Common myeloid progenitor, CD34-positive (primary cell): ENCODE measurements at regions of chr11 and their contacts with region 1.

Region 1: DNA sequence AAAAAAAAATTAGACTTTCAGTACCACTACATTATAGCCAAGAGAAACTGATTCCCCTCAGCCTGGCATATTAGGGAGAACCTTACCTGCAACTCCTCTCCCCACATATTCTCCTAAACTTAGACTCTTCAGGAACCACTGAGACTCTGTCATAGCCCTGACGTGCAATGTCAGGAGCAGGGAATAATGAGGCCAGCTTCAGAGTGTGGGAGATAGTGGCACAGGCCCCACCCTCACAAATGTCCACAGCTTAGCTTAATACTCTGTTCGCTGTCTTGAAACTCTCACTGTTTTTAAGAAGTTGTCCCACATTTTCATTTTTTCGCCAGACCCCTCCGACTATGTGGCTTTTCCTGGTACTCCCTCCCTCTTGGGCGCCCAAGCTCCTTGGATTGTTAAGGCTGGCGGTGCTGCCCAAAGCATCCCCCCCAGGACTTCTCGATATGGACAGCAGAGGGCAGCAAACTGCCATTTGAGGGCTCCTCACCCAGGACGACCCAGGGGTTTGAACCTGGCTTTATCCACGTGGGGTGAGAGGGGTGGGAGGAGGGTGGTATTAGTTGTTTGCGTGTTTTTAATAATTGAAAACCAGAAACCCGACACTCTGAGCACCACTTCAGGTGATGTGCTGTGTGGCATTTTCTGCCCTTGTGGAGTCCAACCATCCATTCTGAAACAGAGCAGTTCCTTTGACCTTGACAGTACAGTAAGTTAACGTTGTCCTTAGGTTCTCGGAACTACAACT is 45.2 kb upstream of the RASSF10 start:
- DNase-seq: peak; percentile 50 to 74 (median 62)
- H3K4me3 ChIP-seq: no peak overlapping the region
- H3K27ac ChIP-seq: no peak overlapping the region
- H3K4me1 ChIP-seq: no peaks in the 10 kb centered on the region
- H3K27me3 ChIP-seq: peaks cover 0 to 3% (median 0%) of the 10 kb centered on the region in 5 experiments

Region 2: GRCh38 chr11:12922980-12923507 is 40.9 kb before region 1 on chr11:
- CTCF ChIA-PET with region 1: no interaction called
- POLR2A ChIA-PET with region 1: no interaction called
- DNase-seq: no peak
- H3K4me3 ChIP-seq: no peak overlapping the region
- H3K27ac ChIP-seq: no peak overlapping the region
- H3K4me1 ChIP-seq: no peaks in the 10 kb centered on the region
- H3K27me3 ChIP-seq: peaks cover 0 to 4% (median 0%) of the 10 kb centered on the region in 5 experiments

Region 3: DNA sequence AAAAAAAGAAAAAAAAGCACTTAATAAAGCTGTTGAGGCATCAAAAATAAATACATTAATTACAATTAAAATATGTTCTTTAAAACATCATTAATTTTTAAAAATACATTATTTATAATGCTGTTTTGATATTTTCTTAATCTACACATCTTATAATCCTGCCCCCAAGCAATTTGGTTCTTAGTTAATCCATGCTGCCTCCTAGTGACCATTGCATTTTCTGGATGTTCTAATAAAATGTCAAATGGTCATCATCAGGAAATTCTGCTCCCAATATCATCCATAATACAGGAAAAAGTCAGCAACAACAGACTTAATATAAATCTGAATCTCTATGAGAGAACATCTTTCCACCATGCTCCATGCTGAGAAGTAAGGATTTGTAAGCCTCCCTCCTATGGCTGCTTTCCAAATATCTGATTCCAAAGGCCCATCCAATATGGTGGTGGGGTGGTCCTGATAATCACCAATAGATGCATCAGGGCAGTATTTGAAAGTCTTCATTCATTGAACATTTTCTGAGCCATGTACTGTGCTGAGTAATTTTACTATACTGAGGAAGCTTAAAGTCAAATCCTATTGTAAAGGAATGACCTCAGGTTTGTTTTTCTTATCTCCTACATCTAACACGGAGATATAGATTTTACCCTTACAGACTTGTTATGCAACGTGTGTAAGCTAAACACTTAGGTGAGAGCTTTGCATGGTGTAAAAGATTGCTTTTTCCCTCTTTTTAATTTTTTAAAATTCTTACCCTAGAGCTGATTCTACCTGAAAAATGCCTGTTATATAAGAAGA is 189.0 kb after region 1 on chr11:
- CTCF ChIA-PET with region 1: interaction called, 22 read pairs
- POLR2A ChIA-PET with region 1: no interaction called
- DNase-seq: peak; percentile 15 to 40 (median 18)
- H3K4me3 ChIP-seq: no peak overlapping the region
- H3K27ac ChIP-seq: no peak overlapping the region
- H3K4me1 ChIP-seq: no peaks in the 10 kb centered on the region
- H3K27me3 ChIP-seq: no peaks in the 10 kb centered on the region